ENCODE measurements at regions of chr3 and their contacts with region 1.

Region 1: DNA sequence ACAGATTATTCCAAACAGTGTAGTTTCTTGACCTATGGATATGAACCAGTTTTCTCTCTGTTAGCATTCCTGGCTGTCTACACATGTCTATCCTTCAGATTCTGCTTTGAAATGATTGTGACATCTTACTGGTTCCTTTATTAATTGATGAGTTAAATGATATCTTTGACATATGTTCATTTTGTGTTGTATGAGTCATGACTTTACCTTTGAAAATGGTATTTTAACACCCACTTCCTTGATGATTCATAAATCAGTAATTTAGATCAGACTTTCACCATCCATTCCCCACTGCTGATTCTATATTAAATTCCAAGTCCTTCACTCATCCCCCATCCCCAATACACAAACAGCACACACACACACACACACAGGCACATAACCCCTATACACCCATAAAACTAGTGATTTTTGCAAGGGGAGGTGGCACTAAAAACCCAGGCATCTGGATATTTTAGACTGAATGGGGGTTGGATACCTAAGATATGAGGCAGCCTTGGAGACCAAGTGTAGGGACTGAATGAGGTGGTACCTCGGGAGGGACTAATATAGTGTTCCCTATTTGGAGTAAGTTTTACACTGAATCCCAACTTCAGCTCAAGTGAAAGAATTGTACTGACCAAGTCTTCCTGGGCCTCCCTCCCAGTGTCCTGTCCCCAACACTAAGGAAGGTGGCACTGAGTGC is 9.7 kb downstream of the CCK start:
- DNase-seq: no peak
- CTCF ChIP-seq: no peak

Region 2: GRCh38 chr3:42539869-42540714 is 283.8 kb after region 1 on chr3:
- in situ Hi-C with region 1: loop called (anchors 10 kb)
- DNase-seq: peak; percentile 84
- CTCF ChIP-seq: peak; percentile 78